PC-9 (cell line): ENCODE measurements at regions of chr6 and their contacts with region 1.

Region 1: GRCh38 chr6:5003604-5004372 is at the start of gene RPP40:
- DNase-seq: peak; percentile 87 to 98
- H3K4me3 ChIP-seq: peak within 1 kb of the TSS; percentile 71
- H3K27ac ChIP-seq: peak within 1 kb of the TSS; percentile 76
- H3K4me1 ChIP-seq: no peaks in the 10 kb centered on the region
- H3K27me3 ChIP-seq: no peaks in the 10 kb centered on the region
- CTCF ChIP-seq: peak; percentile 77
- total RNA-seq, gene RPP40: 16.0 and 21.0 TPM in 2 replicates

Region 2: GRCh38 chr6:4588162-4588561 is 415.6 kb before region 1 on chr6:
- CTCF ChIA-PET with region 1: interaction called, 11 read pairs
- POLR2A ChIA-PET with region 1: no interaction called
- intact Hi-C with region 1: no loop called
- DNase-seq: no peak
- H3K4me3 ChIP-seq: no peak overlapping the region
- H3K27ac ChIP-seq: no peak overlapping the region
- H3K4me1 ChIP-seq: peaks cover 12% of the 10 kb centered on the region
- H3K27me3 ChIP-seq: no peaks in the 10 kb centered on the region
- CTCF ChIP-seq: no peak